GM10248 (cell line): ENCODE measurements at regions of chr11 and their contacts with region 1.

Region 1: DNA sequence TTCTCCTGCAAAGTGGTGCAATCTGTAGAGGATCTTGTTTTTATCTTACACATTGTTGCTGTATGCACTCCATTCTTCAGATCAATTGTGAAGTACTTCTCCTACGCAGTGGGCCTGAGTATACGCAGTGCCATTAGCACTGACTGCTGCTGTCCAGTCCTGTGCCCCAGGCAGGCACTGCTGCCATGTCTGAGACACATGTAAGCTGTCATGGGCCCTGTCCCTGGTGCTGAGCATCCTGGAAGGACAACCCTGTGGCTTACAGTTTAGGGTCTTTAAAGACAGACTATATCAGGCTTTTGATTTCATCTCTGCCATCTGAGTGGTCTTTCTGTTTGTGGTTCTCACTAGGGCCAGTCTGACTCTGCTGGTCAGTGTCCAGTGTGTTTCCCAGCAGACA is 44.8 kb upstream of the PTPN5 start:
- DNase-seq: no peak
- CTCF ChIP-seq: no peak

Region 2: GRCh38 chr11:18804199-18804999 is 32.0 kb before region 1 on chr11:
- CTCF ChIA-PET with region 1: no interaction called
- POLR2A ChIA-PET with region 1: no interaction called
- DNase-seq: no peak
- CTCF ChIP-seq: no peak

Region 3: DNA sequence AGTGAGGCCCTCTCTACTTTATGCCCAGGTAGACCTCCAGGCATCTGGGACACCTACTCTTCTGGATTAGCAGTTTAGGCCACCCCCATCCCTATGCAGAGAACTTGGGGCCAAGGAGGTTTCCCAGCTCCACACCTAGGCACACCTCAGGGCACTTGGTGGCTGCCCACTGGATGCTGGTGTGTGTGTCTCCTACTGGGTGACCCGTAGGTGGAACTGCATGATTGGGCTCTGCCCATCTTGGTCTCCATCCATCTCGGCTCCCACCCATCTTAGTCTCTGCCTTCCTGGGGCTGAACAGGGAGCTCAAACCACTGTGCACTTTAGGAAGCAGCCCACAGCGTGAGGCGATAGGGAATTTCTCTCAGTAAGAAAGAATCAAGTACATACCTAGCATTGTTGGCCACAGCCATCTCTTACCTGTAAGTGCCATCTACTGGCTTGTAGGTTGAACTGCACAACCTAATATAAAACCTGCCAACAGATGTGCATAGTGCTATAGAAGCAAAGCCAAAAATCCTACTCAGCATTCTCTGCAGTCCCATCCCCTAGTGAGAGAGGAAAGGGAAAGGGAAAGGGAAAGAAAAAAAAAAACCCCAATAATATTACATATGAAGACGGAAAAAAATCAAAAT is 16.8 kb after region 1 on chr11:
- CTCF ChIA-PET with region 1: interaction called, 10 read pairs
- POLR2A ChIA-PET with region 1: no interaction called
- DNase-seq: peak; percentile 30
- CTCF ChIP-seq: peak; percentile 46

Region 4: DNA sequence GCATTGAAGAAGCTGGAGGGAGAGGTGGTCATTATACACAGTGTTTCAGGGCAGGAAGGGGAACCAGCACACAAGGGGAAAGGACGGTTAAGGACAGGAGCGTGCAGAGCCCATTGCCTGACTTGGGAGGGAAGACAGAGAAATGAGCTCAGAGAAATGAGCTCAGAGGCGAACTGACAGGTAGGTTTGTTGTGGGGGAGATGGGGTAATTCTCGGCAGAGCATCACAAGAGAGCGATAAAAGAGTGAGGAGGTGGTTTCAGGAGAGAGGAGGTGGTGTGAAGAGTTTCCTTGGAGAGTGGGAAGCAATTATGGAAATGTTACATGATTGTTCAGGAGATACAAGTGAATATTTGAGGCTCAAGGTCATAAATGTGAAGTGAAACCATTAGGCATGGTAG is 41.8 kb after region 1 on chr11:
- CTCF ChIA-PET with region 1: no interaction called
- POLR2A ChIA-PET with region 1: no interaction called
- DNase-seq: no peak
- CTCF ChIP-seq: no peak